ENCODE measurements at regions of chr6 and their contacts with region 1.

Region 1: GRCh38 chr6:2931970-2932748 is 29.1 kb upstream of the SERPINB9 start:
- ATAC-seq: peak; percentile 86 to 100 (median 99)
- H3K4me3 ChIP-seq: no peak overlapping the region
- H3K27ac ChIP-seq: peak overlapping the region in 1 of 2 donors; percentile 14
- H3K4me1 ChIP-seq: peaks cover 6 to 12% of the 10 kb centered on the region in 2 donors

Region 2: GRCh38 chr6:2841264-2842138 is 90.7 kb before region 1 on chr6 and contains the start of gene SERPINB1:
- in situ Hi-C with region 1: loop called in 2 of 9 experiments (anchors 5 to 25 kb)
- ATAC-seq: peak; percentile 65 to 95 (median 86)
- H3K4me3 ChIP-seq: peak within 1 kb of the TSS in 4 of 5 donors; percentile 0 to 21 (median 9)
- H3K27ac ChIP-seq: peak within 1 kb of the TSS; percentile 38 to 77
- H3K4me1 ChIP-seq: peaks cover 21 to 24% of the 10 kb centered on the region in 2 donors
- total RNA-seq, gene SERPINB1: 0.43 to 45.5 (median 1.8) TPM

Region 3: DNA sequence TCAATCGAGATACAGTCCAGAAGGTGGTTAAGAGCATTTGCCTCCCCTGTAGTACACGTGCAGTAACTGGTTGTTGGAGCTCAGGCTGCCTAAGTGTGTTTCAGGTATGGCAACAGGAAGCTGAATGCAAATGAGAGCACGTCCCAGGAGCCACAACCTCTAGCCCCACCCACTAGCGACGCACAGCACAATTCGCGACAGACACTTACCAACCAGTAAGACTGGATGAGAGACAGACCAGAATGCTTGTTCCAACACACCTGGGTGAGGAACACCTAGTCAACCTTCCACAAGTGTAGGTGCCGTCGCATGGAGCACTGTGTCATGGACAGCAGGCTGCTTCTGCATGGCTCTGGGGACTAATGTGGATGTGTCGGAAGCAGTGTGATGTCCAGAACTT is 83.3 kb before region 1 on chr6:
- in situ Hi-C with region 1: loop called in 2 of 9 experiments (anchors 5 to 25 kb)
- ATAC-seq: no peak
- H3K4me3 ChIP-seq: no peak overlapping the region
- H3K27ac ChIP-seq: no peak overlapping the region
- H3K4me1 ChIP-seq: peaks cover 6 to 7% of the 10 kb centered on the region in 2 donors

Region 4: DNA sequence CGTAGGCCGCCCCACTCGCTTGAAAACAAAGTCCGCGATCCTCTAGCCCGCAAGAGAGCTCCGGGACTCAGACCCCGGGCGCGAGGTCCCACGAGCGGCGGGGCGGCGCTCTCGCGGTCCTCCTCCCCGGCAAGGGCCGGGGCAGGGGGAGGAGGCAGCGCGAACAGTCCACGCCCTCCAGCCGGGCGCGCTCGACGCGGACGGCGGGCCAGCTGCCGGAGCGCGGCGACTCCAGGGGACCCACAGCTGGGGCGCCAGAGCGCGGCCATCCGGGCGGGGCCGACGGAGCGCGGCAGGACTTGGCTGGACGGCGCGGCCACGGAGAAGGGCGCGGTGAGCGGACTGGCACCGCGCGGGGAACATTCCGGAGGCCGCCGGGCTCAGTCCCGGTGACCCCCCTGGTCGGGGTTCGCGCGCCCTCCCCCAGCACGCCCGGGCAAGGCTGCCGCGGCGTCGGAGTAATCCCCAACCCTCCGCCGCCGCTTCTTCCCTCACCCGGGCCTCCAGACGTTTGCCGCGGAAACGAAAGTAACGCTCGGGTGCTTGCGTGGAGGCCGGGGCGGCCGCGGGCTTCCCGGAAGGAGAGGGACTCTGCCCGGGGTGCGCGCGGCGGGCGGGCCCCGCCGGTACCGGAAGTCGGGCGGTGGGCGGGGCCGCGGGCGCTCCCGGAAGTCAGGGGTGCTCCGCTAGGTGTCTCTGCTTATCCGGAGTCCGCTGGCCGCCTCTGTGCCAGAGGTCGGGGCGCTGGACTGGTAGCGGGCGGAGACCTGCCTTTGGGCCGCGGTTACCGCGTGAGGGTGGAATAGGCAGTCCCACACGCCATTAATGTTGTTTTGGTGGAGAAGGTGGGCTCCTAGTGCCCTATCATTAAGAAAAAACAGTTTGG is 136.4 kb after region 1 on chr6 and contains the start of gene RIPK1:
- in situ Hi-C with region 1: no loop called
- ATAC-seq: peak; percentile 63 to 88 (median 82)
- H3K4me3 ChIP-seq: peak within 1 kb of the TSS; percentile 79 to 96 (median 93)
- H3K27ac ChIP-seq: peak within 1 kb of the TSS; percentile 96 to 98
- H3K4me1 ChIP-seq: peaks cover 8 to 11% of the 10 kb centered on the region in 2 donors
- total RNA-seq, gene RIPK1: 2.3 to 17.9 (median 11.8) TPM